ENCODE measurements at regions of chr1 and their contacts with region 1.

Region 1: GRCh38 chr1:231866392-231867331 is 240.1 kb downstream of the DISC1 start:
- H3K4me3 Mint-ChIP-seq: no peak overlapping the region
- H3K27ac Mint-ChIP-seq: peak overlapping the region; percentile 71
- H3K4me1 Mint-ChIP-seq: peaks cover 42% of the 10 kb centered on the region
- H3K27me3 Mint-ChIP-seq: no peaks in the 10 kb centered on the region

Region 2: GRCh38 chr1:231918239-231919015 is 51.8 kb after region 1 on chr1:
- intact Hi-C with region 1: no loop called
- H3K4me3 Mint-ChIP-seq: no peak overlapping the region
- H3K27ac Mint-ChIP-seq: no peak overlapping the region
- H3K4me1 Mint-ChIP-seq: peaks cover 23% of the 10 kb centered on the region
- H3K27me3 Mint-ChIP-seq: no peaks in the 10 kb centered on the region

Region 3: GRCh38 chr1:231931846-231932454 is 65.3 kb after region 1 on chr1:
- intact Hi-C with region 1: no loop called
- H3K4me3 Mint-ChIP-seq: no peak overlapping the region
- H3K27ac Mint-ChIP-seq: no peak overlapping the region
- H3K4me1 Mint-ChIP-seq: peaks cover 15% of the 10 kb centered on the region
- H3K27me3 Mint-ChIP-seq: no peaks in the 10 kb centered on the region

Region 4: DNA sequence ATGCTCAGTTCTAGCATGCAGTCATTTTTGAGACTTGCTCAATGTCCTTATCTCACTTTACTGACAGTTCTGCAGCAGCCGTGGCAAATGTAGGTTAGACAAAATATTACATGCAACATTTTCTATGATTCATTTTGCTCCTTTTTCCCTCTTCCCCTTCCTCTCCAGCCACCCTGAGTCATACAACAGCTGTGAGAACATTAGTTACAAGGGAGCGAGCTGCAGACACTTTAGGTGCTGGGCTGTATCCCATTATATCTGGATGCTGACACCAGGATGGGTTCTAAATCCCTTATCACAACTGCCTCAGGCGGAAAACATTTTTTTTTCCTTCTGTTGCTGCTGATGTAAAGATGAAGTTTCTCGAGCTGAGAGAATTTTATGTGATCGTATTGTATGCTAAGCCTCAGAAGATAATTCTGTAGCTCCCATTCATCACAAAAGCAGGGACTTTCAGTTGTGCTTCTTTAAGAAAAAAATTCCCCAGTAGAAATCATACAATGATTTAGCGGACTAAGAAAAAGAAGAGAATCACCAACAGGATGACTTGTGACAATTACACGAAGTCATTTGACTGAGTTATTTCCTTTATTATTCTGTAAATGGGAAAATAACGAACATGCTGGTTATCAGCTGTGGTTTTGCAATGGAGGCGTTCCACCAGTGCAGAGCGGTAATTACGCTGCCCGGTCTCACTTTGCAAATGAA is 104.9 kb after region 1 on chr1:
- intact Hi-C with region 1: loop called (anchors 5 kb)
- H3K4me3 Mint-ChIP-seq: no peak overlapping the region
- H3K27ac Mint-ChIP-seq: peak overlapping the region; percentile 77
- H3K4me1 Mint-ChIP-seq: peaks cover 44% of the 10 kb centered on the region
- H3K27me3 Mint-ChIP-seq: no peaks in the 10 kb centered on the region

Region 5: GRCh38 chr1:232403017-232403714 is 536.5 kb after region 1 on chr1:
- intact Hi-C with region 1: loop called (anchors 10 kb)
- H3K4me3 Mint-ChIP-seq: no peak overlapping the region
- H3K27ac Mint-ChIP-seq: no peak overlapping the region
- H3K4me1 Mint-ChIP-seq: peaks cover 7% of the 10 kb centered on the region
- H3K27me3 Mint-ChIP-seq: no peaks in the 10 kb centered on the region

Region 6: DNA sequence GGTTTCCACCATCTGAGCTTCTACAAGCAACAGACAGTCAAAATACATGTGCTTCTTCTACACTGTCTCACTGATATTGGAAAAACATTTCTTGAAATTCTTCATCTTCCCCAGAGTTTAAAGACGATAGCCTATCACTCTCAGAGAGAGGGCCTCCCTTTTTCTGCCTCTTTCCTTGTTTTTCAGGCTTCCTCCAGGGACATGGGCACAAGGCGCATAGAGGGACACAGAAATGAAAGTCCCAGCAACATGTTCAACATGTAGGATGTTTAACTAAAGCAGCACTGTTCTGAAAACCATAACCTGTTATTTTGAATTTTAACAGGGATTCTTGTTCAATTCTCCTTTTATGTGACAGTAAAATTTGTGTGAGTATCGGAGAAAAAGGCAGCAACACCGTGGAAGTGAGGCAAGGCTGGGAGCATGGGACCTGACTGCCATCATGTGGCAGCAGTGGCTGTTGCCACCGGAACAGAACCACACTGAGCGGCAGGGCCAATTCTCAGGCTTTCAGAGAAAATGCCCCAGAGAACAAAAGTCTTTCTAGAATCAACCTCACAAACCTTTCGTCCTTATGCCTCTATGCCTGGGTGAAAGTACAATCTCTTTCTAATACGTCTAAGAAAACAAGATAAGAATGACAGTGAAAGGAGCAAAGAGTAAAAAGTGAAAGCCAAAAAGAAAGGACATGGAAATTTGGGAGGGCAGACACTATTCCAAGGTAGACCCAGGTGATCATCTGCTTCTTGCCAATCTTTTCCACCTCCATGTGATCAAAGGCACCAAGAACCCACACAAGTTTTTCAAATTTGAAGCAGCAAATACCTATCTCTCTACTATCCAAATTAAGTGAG is 1374.4 kb after region 1 on chr1:
- intact Hi-C with region 1: loop called (anchors 10 kb)
- H3K4me3 Mint-ChIP-seq: peak overlapping the region; percentile 46
- H3K27ac Mint-ChIP-seq: no peak overlapping the region
- H3K4me1 Mint-ChIP-seq: peaks cover 17% of the 10 kb centered on the region
- H3K27me3 Mint-ChIP-seq: no peaks in the 10 kb centered on the region

Measured in dendritic cell treated with granulocyte-macrophage colony-stimulating factor and Interleukin-4, amounts not matched to agents 40 ng/mL and 50 ng/mL, for 4 days (primary cell).